ENCODE measurements at regions of chr4 and their contacts with region 1.

Region 1: GRCh38 chr4:139656614-139657486 is 8.8 kb upstream of the MGST2 start:
- H3K4me3 ChIP-seq: no peak overlapping the region
- H3K27ac ChIP-seq: no peak overlapping the region
- H3K4me1 ChIP-seq: no peaks in the 10 kb centered on the region
- CTCF ChIP-seq: peak; percentile 42; the same call in 1 of the 2 replicates

Region 2: DNA sequence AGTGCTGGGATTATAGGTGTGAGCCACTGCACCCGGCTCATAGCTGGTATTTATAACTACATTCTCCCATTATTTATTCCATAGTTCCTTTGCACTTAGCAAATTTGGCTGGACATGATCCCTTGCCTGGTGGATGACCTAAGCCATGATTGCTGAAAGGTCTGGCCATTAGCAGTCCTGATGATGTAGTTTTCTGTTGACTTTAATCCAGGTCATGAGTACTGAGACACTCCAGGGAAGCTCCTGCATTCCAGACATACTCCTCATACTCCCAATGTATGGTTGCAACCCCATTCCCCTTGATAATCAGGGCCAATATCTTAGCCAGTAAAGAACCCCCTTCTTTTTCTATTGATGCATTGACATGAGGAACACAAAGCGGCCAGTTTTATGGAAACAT is 15.6 kb before region 1 on chr4:
- CTCF ChIA-PET with region 1: interaction called, 16 read pairs
- POLR2A ChIA-PET with region 1: no interaction called
- H3K4me3 ChIP-seq: no peak overlapping the region
- H3K27ac ChIP-seq: no peak overlapping the region
- H3K4me1 ChIP-seq: no peaks in the 10 kb centered on the region
- CTCF ChIP-seq: no peak

Region 3: DNA sequence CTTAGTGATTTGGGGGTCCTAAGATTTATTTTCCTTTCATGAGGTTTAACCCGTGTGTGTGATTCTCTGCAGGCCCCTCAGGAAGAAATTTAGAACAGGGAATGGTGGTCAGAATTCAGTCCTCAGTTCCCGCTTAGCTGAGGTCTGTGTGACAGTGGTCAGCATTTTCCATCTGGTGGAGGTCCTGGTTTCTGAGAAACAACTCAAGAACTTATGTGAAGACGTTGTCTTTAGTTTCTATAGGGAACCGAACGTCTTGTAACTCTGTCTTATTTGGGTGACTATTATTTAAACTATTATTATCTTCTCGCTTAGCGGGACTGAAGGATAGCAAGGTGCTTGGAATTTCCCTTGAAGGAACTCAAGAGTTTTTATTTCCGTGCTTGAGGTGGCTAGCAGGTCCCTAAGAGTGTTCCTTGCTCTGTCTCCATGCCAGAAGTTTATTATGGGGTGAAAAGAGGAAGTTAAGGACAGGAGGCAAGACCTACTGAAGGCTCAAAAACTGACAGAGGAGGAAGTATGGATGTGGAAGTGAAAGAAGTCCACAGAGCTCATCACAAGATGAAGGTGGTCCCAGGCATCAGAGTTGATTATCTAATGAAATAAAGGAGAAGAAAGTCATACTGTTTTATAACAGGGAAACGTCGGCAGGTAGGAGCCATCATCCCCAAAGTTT is 18.2 kb after region 1 on chr4:
- CTCF ChIA-PET with region 1: no interaction called
- POLR2A ChIA-PET with region 1: no interaction called
- H3K4me3 ChIP-seq: no peak overlapping the region
- H3K27ac ChIP-seq: no peak overlapping the region
- H3K4me1 ChIP-seq: no peaks in the 10 kb centered on the region
- CTCF ChIP-seq: no peak

Region 4: GRCh38 chr4:139700568-139700967 is 43.7 kb after region 1 on chr4:
- CTCF ChIA-PET with region 1: interaction called, 19 read pairs
- POLR2A ChIA-PET with region 1: no interaction called
- H3K4me3 ChIP-seq: no peak overlapping the region
- H3K27ac ChIP-seq: no peak overlapping the region
- H3K4me1 ChIP-seq: no peaks in the 10 kb centered on the region
- CTCF ChIP-seq: no peak